Testis (tissue), 5 donors: ENCODE measurements at regions of chr4 and their contacts with region 1.

Region 1: GRCh38 chr4:183659029-183659871 is at the starts of genes RWDD4 and TRAPPC11:
- DNase-seq: peak; percentile 99
- H3K4me3 ChIP-seq: peak within 1 kb of the TSS; percentile 72 to 88
- H3K27ac ChIP-seq: peak within 1 kb of the TSS; percentile 91 to 95
- H3K4me1 ChIP-seq: no peaks in the 10 kb centered on the region
- H3K27me3 ChIP-seq: no peaks in the 10 kb centered on the region
- CTCF ChIP-seq: peak in 2 of 3 experiments; percentile 46 to 71
- POLR2A ChIP-seq: peak; percentile 61
- total RNA-seq, gene RWDD4: 23.0 to 25.4 TPM
- total RNA-seq, gene TRAPPC11: 65.2 to 81.6 TPM

Region 2: DNA sequence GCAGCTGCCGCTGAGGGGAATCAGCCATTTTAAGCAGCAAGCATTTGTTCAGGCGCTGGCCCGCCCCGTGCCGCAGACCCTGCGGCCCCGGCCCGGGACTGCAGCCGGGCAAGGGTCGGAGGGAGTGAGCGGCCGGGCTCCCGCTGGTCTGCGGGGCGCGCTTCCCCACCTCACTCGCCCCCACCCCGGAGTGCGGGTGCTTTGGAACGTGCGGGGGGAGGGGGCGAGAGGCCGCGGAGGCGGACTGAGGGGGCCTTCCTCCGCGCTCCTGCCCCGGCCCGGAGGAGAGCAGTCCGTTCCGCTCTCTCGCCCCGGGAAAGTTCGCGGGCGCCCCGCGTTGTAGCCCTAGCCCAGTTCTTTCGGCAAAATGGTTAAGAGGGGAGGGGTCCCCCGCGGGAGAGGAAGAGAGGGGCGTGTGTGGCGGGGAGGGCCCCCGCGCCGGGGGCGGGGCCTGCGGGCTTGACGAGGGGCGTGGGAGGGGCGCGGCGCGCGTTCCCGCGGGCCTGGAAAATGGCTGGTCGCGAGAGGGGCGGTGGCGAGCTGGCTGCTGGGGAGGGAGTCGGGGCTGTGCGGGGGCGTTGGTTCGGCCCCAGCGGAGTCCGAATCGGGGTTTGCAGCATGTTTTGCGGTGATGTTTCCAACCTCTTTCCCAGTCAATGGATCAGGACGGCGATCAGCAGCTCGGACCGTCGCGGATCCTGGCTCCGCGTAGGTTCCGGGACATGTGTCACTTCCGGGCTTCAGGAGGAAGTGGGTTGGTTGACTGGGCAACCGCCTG is 153.4 kb before region 1 on chr4:
- intact Hi-C with region 1: loop called (anchors 5 kb)
- DNase-seq: peak; percentile 97
- H3K4me3 ChIP-seq: peak overlapping the region; percentile 91 to 94
- H3K27ac ChIP-seq: peak overlapping the region; percentile 97 to 99
- H3K4me1 ChIP-seq: peaks cover 21% of the 10 kb centered on the region
- H3K27me3 ChIP-seq: no peaks in the 10 kb centered on the region
- CTCF ChIP-seq: no peak
- POLR2A ChIP-seq: no peak

Region 3: GRCh38 chr4:184215709-184216328 is 556.6 kb after region 1 on chr4:
- intact Hi-C with region 1: no loop called
- DNase-seq: no peak
- H3K4me3 ChIP-seq: no peak overlapping the region
- H3K27ac ChIP-seq: peak overlapping the region in 1 of 2 donors; percentile 36
- H3K4me1 ChIP-seq: no peaks in the 10 kb centered on the region
- H3K27me3 ChIP-seq: no peaks in the 10 kb centered on the region
- CTCF ChIP-seq: no peak
- POLR2A ChIP-seq: no peak